ENCODE measurements at regions of chrX and their contacts with region 1.

Region 1: GRCh38 chrX:111098874-111099273 is 2.9 kb downstream of the PAK3 start:
- DNase-seq: peak; percentile 27
- H3K4me3 Mint-ChIP-seq: no peak overlapping the region
- H3K27ac Mint-ChIP-seq: no peak overlapping the region
- H3K4me1 Mint-ChIP-seq: peaks cover 15% of the 10 kb centered on the region
- H3K27me3 Mint-ChIP-seq: peaks cover 18% of the 10 kb centered on the region

Region 2: GRCh38 chrX:110992611-110993010 is 106.3 kb before region 1 on chrX:
- intact Hi-C with region 1: loop called (anchors 1 kb)
- DNase-seq: no peak
- H3K4me3 Mint-ChIP-seq: no peak overlapping the region
- H3K27ac Mint-ChIP-seq: no peak overlapping the region
- H3K4me1 Mint-ChIP-seq: no peaks in the 10 kb centered on the region
- H3K27me3 Mint-ChIP-seq: peaks cover 7% of the 10 kb centered on the region

Region 3: DNA sequence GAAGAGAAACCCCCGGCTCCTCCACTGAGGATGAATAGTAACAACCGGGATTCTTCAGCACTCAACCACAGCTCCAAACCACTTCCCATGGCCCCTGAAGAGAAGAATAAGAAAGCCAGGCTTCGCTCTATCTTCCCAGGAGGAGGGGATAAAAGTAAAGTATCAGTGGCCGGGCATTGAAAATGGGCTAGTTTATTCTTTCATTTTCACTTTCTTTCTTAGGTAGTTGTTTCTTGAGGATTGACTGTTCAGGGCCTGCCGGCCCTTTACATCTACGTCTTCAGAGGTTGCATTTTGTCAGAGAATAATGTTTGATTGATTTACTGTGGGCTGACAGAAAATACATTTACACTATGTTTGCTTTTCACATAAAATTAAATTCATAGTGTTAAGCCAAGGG is 24.3 kb after region 1 on chrX:
- intact Hi-C with region 1: loop called (anchors 1 kb)
- DNase-seq: no peak
- H3K4me3 Mint-ChIP-seq: peak overlapping the region; percentile 65
- H3K27ac Mint-ChIP-seq: peak overlapping the region; percentile 79
- H3K4me1 Mint-ChIP-seq: peaks cover 12% of the 10 kb centered on the region
- H3K27me3 Mint-ChIP-seq: no peaks in the 10 kb centered on the region

Region 4: GRCh38 chrX:111168314-111168713 is 69.4 kb after region 1 on chrX:
- intact Hi-C with region 1: loop called (anchors 5 kb)
- DNase-seq: no peak
- H3K4me3 Mint-ChIP-seq: no peak overlapping the region
- H3K27ac Mint-ChIP-seq: no peak overlapping the region
- H3K4me1 Mint-ChIP-seq: peaks cover 5% of the 10 kb centered on the region
- H3K27me3 Mint-ChIP-seq: peaks cover 4% of the 10 kb centered on the region

Region 5: DNA sequence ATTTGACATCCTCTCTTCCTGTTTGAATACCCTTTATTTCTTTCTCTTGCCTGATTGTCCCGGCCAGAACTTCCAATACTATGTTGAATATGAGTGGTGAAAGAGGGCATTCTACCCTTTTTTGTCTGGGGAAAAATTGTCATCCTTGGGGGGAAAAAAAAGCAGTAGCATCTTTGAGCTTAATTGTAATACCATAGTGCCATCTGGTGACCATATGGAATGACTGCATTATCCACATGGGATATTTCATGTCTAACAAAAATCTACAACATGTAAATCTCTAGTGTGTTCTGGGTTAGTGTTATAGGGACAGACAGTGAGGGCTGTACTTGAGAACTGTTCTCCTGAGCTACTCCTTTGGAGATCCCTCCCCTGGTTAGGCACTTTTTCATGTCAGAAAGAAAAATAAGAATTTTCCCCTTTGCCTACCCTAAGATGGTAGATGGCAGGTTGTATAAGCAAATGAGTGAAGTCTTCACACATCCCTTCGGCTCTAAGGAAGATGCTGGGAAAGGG is 145.4 kb after region 1 on chrX:
- intact Hi-C with region 1: loop called (anchors 1 kb)
- DNase-seq: no peak
- H3K4me3 Mint-ChIP-seq: no peak overlapping the region
- H3K27ac Mint-ChIP-seq: no peak overlapping the region
- H3K4me1 Mint-ChIP-seq: no peaks in the 10 kb centered on the region
- H3K27me3 Mint-ChIP-seq: peaks cover 5% of the 10 kb centered on the region

Measured in activated T-helper 1 cell treated with anti-CD3 and anti-CD28 coated beads, Interleukin-12 subunit alpha, Interleukin-12 subunit beta, Interleukin-2, Interleukin-4 antibody, amounts not matched to agents 30 ng/mL and 10 ng/mL and 1 ng/mL, durations not matched to agents 14 hours and 24 hours and 36 hours (primary cell).